ENCODE measurements at regions of chr13 and their contacts with region 1.

Region 1: DNA sequence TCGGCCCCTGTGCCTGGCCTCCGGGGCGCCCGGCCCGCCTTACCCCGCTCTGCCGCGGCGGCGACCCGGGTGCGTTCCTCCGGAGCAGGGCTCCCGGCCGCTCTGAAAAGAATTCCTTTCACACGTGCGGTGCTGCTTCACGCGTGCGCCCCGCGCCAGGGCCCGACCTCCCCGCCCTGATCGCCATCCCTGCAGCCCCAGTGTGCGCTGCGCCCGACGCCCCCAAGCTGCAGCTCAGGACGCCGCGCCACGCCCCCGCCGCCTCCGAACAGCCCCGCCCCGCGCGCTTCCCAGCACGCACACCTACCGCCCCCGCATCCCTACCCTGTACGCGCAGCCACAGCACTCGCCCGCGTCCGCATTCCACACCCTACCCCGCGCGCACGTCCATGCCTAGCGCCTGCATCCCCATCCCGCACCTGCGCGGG is at the start of gene GJA3:
- DNase-seq: peak; percentile 12 to 80 (median 70)
- ATAC-seq: peak; percentile 69
- H3K4me3 ChIP-seq: peak within 1 kb of the TSS; percentile 42 to 71
- H3K4me3 Mint-ChIP-seq: peak within 1 kb of the TSS; percentile 84
- H3K27ac ChIP-seq: peak within 1 kb of the TSS; percentile 40 to 48
- H3K27ac Mint-ChIP-seq: no peak within 1 kb of the TSS
- H3K4me1 ChIP-seq: peaks cover 12% of the 10 kb centered on the region
- H3K4me1 Mint-ChIP-seq: peaks cover 14% of the 10 kb centered on the region
- H3K27me3 ChIP-seq: peaks cover 0 to 4% of the 10 kb centered on the region in 2 experiments
- H3K27me3 Mint-ChIP-seq: peaks cover 31% of the 10 kb centered on the region
- CTCF ChIP-seq: no peak
- total RNA-seq, gene GJA3: 0.08 TPM in 1 of 2 experiments, not detected in the other

Region 2: DNA sequence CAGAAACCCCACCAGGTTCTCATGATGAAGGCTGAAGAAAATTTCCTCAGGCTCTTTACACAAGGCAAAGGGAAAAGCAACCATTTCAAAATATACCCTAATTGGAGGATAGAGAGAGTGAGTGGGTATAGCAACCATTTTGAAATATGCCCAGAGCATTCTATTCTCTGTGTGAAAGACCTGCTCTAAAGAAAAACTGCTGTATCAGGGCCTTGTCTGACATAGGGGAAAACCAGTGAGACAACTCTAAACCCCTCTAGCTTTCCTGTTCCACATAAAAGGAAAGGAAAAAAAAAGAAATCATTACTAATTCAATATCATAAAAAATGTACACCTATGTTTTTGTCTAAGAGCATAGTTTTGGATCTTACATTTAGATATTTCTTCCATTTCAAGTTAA is 641.8 kb before region 1 on chr13:
- CTCF ChIA-PET with region 1: no interaction called
- POLR2A ChIA-PET with region 1: no interaction called
- intact Hi-C with region 1: no loop called
- DNase-seq: no peak
- ATAC-seq: no peak
- H3K4me3 ChIP-seq: no peak overlapping the region
- H3K4me3 Mint-ChIP-seq: no peak overlapping the region
- H3K27ac ChIP-seq: no peak overlapping the region
- H3K27ac Mint-ChIP-seq: no peak overlapping the region
- H3K4me1 ChIP-seq: no peaks in the 10 kb centered on the region
- H3K4me1 Mint-ChIP-seq: peaks cover 8% of the 10 kb centered on the region
- H3K27me3 ChIP-seq: no peaks in the 10 kb centered on the region
- H3K27me3 Mint-ChIP-seq: no peaks in the 10 kb centered on the region
- CTCF ChIP-seq: no peak

Region 3: DNA sequence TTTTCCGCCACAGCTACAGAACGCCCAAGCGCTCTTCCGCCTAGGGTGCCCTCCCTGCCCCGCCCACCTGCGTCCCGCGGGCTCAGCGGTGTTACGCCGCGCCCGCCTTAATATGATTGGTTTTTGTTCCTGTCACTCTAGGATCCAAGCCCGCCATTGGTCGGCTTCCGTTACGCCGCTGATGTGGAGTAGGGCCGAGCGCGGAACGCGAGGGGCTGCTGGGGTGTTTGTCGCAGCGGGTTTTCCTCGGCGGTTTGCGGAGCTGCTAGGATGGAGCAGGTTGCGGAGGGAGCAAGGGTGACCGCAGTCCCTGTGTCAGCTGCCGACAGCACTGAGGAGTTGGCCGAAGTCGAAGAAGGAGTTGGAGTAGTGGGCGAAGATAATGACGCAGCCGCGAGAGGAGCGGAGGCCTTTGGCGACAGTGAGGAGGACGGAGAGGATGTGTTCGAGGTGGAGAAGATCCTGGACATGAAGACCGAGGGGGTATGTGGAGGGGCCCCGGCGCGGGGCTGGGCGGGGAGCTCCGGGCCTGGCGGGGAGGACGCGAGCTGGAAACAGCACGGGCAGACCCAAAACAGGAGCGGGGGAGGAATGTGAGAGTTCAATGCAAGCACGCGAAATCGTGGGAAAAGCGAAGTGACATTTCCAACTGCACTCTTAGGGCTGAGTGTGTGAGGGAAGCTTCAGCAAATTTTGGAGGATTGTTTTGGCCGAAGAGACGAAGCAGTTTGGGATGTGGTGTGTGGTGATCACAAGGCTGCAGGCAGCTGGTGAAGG is 527.2 kb before region 1 on chr13 and contains the start of gene MPHOSPH8:
- CTCF ChIA-PET with region 1: no interaction called
- POLR2A ChIA-PET with region 1: no interaction called
- intact Hi-C with region 1: loop called in 1 of 2 experiments (anchors 5 kb)
- DNase-seq: peak; percentile 88 to 98 (median 93)
- ATAC-seq: peak; percentile 95
- H3K4me3 ChIP-seq: peak within 1 kb of the TSS; percentile 82 to 89
- H3K4me3 Mint-ChIP-seq: peak within 1 kb of the TSS; percentile 100
- H3K27ac ChIP-seq: peak within 1 kb of the TSS; percentile 88 to 90
- H3K27ac Mint-ChIP-seq: peak within 1 kb of the TSS; percentile 100
- H3K4me1 ChIP-seq: peaks cover 35% of the 10 kb centered on the region
- H3K4me1 Mint-ChIP-seq: peaks cover 33% of the 10 kb centered on the region
- H3K27me3 ChIP-seq: no peaks in the 10 kb centered on the region
- H3K27me3 Mint-ChIP-seq: no peaks in the 10 kb centered on the region
- CTCF ChIP-seq: no peak
- total RNA-seq, gene MPHOSPH8: 32.9 to 35.6 TPM

Region 4: GRCh38 chr13:19927117-19927748 is 233.6 kb before region 1 on chr13:
- CTCF ChIA-PET with region 1: interaction called, 10 read pairs
- POLR2A ChIA-PET with region 1: no interaction called
- intact Hi-C with region 1: loop called (anchors 1 to 2 kb)
- DNase-seq: peak in 2 of 9 experiments; percentile 51 to 64
- ATAC-seq: peak; percentile 52
- H3K4me3 ChIP-seq: no peak overlapping the region
- H3K4me3 Mint-ChIP-seq: no peak overlapping the region
- H3K27ac ChIP-seq: no peak overlapping the region
- H3K27ac Mint-ChIP-seq: no peak overlapping the region
- H3K4me1 ChIP-seq: no peaks in the 10 kb centered on the region
- H3K4me1 Mint-ChIP-seq: no peaks in the 10 kb centered on the region
- H3K27me3 ChIP-seq: no peaks in the 10 kb centered on the region
- H3K27me3 Mint-ChIP-seq: no peaks in the 10 kb centered on the region
- CTCF ChIP-seq: peak; percentile 39

Region 5: GRCh38 chr13:19984430-19985218 is 176.2 kb before region 1 on chr13:
- CTCF ChIA-PET with region 1: interaction called, 4 read pairs
- POLR2A ChIA-PET with region 1: no interaction called
- intact Hi-C with region 1: loop called in 1 of 2 experiments (anchors 2 kb)
- DNase-seq: peak in 2 of 9 experiments; percentile 43 to 57
- ATAC-seq: peak; percentile 51
- H3K4me3 ChIP-seq: no peak overlapping the region
- H3K4me3 Mint-ChIP-seq: no peak overlapping the region
- H3K27ac ChIP-seq: no peak overlapping the region
- H3K27ac Mint-ChIP-seq: no peak overlapping the region
- H3K4me1 ChIP-seq: peaks cover 7% of the 10 kb centered on the region
- H3K4me1 Mint-ChIP-seq: peaks cover 48% of the 10 kb centered on the region
- H3K27me3 ChIP-seq: no peaks in the 10 kb centered on the region
- H3K27me3 Mint-ChIP-seq: no peaks in the 10 kb centered on the region
- CTCF ChIP-seq: peak; percentile 30

Region 6: DNA sequence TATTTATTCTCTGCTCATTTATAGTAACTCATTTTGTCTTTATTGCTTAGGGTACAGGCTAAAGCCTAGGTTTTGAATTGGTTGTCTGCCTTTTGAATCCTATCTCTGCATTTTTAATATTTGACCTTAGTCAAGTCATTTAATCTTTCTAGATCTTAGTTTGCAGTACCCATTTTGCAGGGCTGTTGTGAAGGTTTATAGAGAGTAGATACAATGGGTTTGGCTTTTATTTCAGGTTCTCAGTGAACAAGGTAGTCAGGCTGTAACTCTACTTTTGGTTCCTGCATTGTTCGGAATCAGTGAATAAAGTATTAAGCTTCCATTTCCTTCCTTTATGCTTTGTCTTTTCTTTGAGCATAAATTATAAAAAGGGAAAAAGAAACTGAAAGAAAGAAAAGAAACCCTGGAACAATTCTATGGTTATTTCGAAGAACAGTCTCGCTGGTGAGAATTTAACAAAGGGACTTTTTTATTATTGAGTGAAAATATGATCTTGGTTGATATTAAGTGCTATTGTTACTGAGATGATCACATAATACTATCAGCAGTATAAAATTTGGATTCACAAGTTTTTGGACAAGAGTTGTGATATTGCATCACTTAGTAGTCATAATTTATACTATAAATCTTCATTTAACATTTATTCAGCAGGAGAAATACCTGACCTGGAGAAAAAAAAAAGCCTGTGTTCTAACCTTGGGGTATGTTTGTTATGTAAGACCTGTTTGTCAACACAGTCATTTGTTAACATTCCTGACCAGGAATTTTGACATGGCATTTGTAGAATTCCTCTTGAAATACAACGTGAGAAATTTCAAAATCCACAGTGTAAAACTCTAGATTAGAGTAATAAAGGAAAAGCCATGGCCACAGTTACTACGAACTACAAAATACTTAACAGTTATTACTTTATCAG is 111.0 kb before region 1 on chr13:
- CTCF ChIA-PET with region 1: no interaction called
- POLR2A ChIA-PET with region 1: no interaction called
- intact Hi-C with region 1: loop called in 1 of 2 experiments (anchors 5 kb)
- DNase-seq: peak in 1 of 9 experiments; percentile 10
- ATAC-seq: no peak
- H3K4me3 ChIP-seq: no peak overlapping the region
- H3K4me3 Mint-ChIP-seq: peak overlapping the region; percentile 60
- H3K27ac ChIP-seq: peak overlapping the region in 1 of 2 experiments; percentile 13
- H3K27ac Mint-ChIP-seq: peak overlapping the region; percentile 61
- H3K4me1 ChIP-seq: peaks cover 13% of the 10 kb centered on the region
- H3K4me1 Mint-ChIP-seq: peaks cover 23% of the 10 kb centered on the region
- H3K27me3 ChIP-seq: no peaks in the 10 kb centered on the region
- H3K27me3 Mint-ChIP-seq: no peaks in the 10 kb centered on the region
- CTCF ChIP-seq: no peak

Region 7: DNA sequence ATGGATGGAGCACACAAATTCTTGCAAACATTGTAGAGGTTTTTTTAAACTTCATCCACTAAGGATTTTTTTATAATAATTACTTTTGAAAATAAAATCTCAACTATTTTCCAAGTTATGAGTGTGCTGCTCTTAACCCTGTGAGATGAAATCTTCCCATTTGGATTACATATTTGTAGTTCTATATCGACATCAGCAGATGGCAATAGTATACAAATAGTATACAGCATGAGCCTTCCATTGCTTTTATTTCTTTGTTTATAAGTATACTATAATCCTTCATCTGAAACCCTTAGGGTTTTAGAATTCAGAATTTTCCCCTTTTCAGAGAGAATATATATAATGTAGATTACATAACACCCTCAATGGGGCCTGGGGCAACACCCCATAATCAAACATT is 70.5 kb before region 1 on chr13:
- CTCF ChIA-PET with region 1: interaction called, 4 read pairs
- POLR2A ChIA-PET with region 1: no interaction called
- intact Hi-C with region 1: loop called (anchors 1 kb)
- DNase-seq: peak in 2 of 9 experiments; percentile 13 to 22
- ATAC-seq: peak; percentile 55
- H3K4me3 ChIP-seq: no peak overlapping the region
- H3K4me3 Mint-ChIP-seq: no peak overlapping the region
- H3K27ac ChIP-seq: no peak overlapping the region
- H3K27ac Mint-ChIP-seq: no peak overlapping the region
- H3K4me1 ChIP-seq: no peaks in the 10 kb centered on the region
- H3K4me1 Mint-ChIP-seq: no peaks in the 10 kb centered on the region
- H3K27me3 ChIP-seq: no peaks in the 10 kb centered on the region
- H3K27me3 Mint-ChIP-seq: no peaks in the 10 kb centered on the region
- CTCF ChIP-seq: peak; percentile 21

Region 8: DNA sequence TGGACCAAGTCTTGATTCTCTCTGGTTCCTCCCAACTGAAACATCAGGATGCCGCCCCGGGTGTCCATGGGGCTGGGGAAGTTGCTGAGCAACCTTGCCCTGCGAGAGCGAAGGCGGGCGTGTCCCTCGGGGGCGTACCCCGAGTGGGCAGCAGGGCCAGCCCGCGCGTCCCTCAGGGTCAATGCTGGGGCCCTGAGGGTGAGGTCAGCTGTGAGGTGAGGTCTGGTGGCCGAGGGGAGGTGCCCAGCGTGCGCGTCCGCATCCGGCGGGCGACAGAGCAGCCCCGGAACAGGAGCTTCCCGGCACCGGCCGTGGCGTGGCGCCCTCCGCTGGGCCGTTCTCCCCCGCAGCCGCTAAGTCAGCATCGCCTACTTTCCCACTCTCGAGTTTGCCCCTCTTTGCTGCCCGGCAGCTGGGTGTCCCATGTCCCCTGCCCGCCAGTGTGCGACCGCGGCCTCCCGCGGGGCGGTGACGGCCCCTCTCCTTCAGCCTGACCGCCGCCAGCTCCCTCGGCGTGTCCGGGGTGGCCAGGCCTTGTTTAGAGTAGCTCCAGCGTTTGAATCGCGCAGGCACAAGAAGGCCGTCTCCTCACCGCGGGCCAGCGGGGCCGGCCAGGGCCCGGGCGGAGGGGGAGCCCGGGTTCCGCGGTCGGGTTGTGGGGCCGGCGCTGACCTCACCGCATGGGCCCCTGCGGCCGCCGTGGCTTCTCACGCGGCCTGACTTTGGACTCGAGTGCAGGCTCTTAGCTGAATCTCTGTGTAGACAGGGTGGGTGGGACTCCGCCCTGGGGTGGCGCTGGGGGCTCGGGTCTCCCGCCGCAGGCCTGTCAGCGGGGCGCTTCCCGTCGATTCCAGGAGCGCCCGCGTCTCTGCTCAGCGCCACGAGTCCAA is 33.0 kb before region 1 on chr13:
- CTCF ChIA-PET with region 1: interaction called, 3 read pairs
- POLR2A ChIA-PET with region 1: interaction called, 5 read pairs
- intact Hi-C with region 1: loop called (anchors 1 to 5 kb)
- DNase-seq: peak in 7 of 9 experiments; percentile 11 to 62 (median 43)
- ATAC-seq: peak; percentile 62
- H3K4me3 ChIP-seq: peak overlapping the region; percentile 50 to 59
- H3K4me3 Mint-ChIP-seq: peak overlapping the region; percentile 68
- H3K27ac ChIP-seq: no peak overlapping the region
- H3K27ac Mint-ChIP-seq: no peak overlapping the region
- H3K4me1 ChIP-seq: peaks cover 12% of the 10 kb centered on the region
- H3K4me1 Mint-ChIP-seq: peaks cover 2% of the 10 kb centered on the region
- H3K27me3 ChIP-seq: peaks cover 20 to 23% of the 10 kb centered on the region in 2 experiments
- H3K27me3 Mint-ChIP-seq: peaks cover 24% of the 10 kb centered on the region
- CTCF ChIP-seq: peak; percentile 19